Mammary epithelial cell (primary cell): ENCODE measurements at regions of chr19 and their contacts with region 1.

Region 1: GRCh38 chr19:19420570-19421298 is 15.3 kb downstream of the GATAD2A start:
- DNase-seq: no peak
- H3K4me3 ChIP-seq: no peak overlapping the region
- H3K27ac ChIP-seq: no peak overlapping the region
- H3K4me1 ChIP-seq: no peaks in the 10 kb centered on the region
- H3K27me3 ChIP-seq: no peaks in the 10 kb centered on the region
- CTCF ChIP-seq: no peak

Region 2: DNA sequence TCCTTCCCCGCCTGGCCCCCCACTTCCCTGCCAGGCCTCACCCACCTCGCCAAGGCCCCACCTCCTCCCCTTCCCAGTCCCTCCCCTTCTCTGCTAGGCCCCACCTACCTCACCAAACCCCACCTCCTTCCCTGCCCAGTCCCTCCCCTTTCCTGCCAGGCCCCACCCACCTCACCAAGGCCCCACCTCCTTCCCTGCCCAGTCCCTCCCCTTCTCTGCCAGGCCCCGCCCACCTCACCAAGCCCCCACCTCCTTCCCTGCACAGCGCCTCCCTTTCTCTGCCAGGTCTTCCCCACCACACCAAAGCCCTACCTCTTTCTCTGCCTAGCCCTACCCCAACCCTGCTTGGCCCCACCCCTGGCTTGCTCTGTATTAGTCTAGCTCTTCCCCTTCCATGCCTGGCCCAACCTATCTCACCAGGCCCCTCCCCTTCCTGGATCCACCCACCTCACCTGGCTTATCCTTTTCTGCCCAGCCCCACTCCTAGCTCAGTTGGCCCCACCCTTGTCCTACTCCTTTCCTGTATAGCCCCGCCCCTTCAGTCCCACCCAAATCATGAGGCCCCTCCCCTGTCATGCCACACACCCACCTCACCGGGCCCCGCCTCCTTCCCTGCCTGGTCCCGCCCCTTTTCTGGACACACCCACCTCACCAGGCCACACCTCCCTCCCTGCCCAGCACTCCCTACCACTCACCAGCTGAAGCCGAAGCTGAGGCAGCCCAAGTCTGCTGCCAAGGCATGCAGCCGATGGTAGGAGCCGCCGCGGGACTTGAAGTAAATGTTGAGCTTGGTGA is 541.0 kb before region 1 on chr19:
- CTCF ChIA-PET with region 1: no interaction called
- dilution Hi-C with region 1: no loop called
- in situ Hi-C with region 1: no loop called
- intact Hi-C with region 1: no loop called
- DNase-seq: peak; percentile 30
- H3K4me3 ChIP-seq: no peak overlapping the region
- H3K27ac ChIP-seq: no peak overlapping the region
- H3K4me1 ChIP-seq: no peaks in the 10 kb centered on the region
- H3K27me3 ChIP-seq: no peaks in the 10 kb centered on the region
- CTCF ChIP-seq: no peak

Region 3: DNA sequence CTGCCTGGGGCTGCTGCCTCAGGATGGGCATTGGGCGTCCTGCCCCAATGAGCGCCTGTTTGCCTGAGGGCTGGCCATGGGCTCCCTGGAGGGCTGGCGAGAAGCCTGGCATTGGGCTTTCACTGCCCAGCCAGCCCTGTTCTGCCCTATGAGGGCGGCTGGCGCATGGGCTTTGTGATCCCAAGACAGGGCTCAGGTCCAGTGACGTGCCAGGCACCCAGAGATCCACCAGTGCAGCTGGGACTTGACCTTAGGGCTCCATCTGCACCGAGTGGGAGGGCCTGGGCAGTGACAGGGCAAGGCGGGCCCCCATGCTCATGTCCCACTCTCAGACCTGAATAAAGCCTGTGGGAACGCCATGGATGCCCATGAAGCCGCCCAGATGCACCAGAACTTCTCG is 65.8 kb before region 1 on chr19:
- CTCF ChIA-PET with region 1: no interaction called
- dilution Hi-C with region 1: loop called (anchors 5 kb)
- in situ Hi-C with region 1: no loop called
- intact Hi-C with region 1: no loop called
- DNase-seq: no peak
- H3K4me3 ChIP-seq: no peak overlapping the region
- H3K27ac ChIP-seq: no peak overlapping the region
- H3K4me1 ChIP-seq: no peaks in the 10 kb centered on the region
- H3K27me3 ChIP-seq: no peaks in the 10 kb centered on the region
- CTCF ChIP-seq: no peak